Mammary epithelial cell (primary cell): ENCODE measurements at regions of chr10 and their contacts with region 1.

Region 1: GRCh38 chr10:101851411-101852116 is 8.0 kb upstream of the KCNIP2 start:
- DNase-seq: no peak
- H3K4me3 ChIP-seq: no peak overlapping the region
- H3K27ac ChIP-seq: no peak overlapping the region
- H3K4me1 ChIP-seq: no peaks in the 10 kb centered on the region
- H3K27me3 ChIP-seq: no peaks in the 10 kb centered on the region
- CTCF ChIP-seq: no peak

Region 2: DNA sequence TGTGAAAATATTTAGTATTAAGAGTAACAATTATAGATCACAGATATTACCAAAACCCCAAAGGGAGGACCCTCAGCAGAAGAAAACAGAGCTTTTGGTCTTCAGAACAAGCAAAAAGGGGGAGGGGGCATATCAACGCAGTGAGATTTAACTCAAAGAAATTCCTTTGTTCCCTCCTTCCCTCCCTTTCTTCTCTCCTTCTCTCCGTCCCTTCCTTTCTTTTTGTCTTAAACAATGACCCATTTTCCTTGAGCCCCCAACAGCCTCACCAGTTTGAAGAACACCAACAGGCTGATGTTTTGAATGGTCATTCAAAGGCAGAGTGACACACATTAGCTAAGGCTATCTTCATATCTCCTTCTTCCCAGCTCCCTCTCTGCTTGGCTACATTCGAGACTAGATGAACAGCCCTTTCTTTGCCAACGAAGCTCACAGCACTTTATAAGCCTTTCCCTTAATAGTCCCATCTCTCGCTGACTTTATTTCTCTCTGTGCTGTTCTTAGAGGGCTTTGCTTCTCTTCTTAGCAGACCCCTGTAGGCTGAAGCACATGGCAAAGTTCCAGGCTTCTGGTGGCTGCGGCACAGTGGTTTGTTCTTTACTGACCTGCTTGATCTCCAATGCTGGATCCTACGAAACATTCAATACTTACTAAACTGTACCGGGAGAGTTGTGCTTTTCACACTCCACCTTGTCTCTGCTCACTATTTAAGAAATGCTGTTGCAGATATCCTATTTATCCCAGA is 67.6 kb after region 1 on chr10:
- CTCF ChIA-PET with region 1: no interaction called
- dilution Hi-C with region 1: loop called (anchors 5 kb)
- in situ Hi-C with region 1: no loop called
- intact Hi-C with region 1: no loop called
- DNase-seq: no peak
- H3K4me3 ChIP-seq: no peak overlapping the region
- H3K27ac ChIP-seq: no peak overlapping the region
- H3K4me1 ChIP-seq: no peaks in the 10 kb centered on the region
- H3K27me3 ChIP-seq: no peaks in the 10 kb centered on the region
- CTCF ChIP-seq: no peak

Region 3: GRCh38 chr10:102096449-102096848 is 244.9 kb after region 1 on chr10:
- CTCF ChIA-PET with region 1: no interaction called
- dilution Hi-C with region 1: no loop called
- in situ Hi-C with region 1: no loop called
- intact Hi-C with region 1: no loop called
- DNase-seq: no peak
- H3K4me3 ChIP-seq: no peak overlapping the region
- H3K27ac ChIP-seq: no peak overlapping the region
- H3K4me1 ChIP-seq: no peaks in the 10 kb centered on the region
- H3K27me3 ChIP-seq: no peaks in the 10 kb centered on the region
- CTCF ChIP-seq: no peak